HepG2 (cell line): ENCODE measurements at regions of chr4 and their contacts with region 1.

Region 1: GRCh38 chr4:94428884-94429557 is 22.7 kb upstream of the PDLIM5 start:
- DNase-seq: peak; percentile 96
- ATAC-seq: peak; percentile 98
- H3K4me3 ChIP-seq: no peak overlapping the region
- H3K27ac ChIP-seq: peak overlapping the region; percentile 68
- H3K4me1 ChIP-seq: peaks cover 48% of the 10 kb centered on the region
- H3K27me3 ChIP-seq: no peaks in the 10 kb centered on the region
- CTCF ChIP-seq: no peak
- EP300 ChIP-seq: peak in 1 of 2 experiments; percentile 86; a peak in 3 of 4 replicates
- POLR2A ChIP-seq: no peak
- RAD21 ChIP-seq: peak; percentile 26; the same call in 1 of the 2 replicates

Region 2: DNA sequence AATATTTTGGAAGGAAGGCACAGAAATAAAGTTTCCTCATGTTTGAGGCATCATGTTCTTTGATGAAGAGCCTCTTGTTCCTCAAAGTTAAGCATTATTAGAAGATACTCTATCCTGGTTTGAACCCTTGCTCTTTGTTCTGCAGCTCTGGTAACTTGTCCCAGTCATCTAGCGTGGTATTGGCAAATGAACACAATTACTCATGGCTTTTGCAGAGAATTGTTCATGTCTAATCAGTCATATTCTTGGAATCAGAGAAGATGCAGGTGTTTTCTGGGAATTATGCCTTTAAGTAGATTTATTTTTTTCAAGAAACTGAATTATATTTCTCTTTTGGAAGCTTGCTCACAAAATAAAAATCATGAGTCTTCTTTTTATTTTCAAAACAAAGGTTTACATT is 33.5 kb before region 1 on chr4:
- CTCF ChIA-PET with region 1: no interaction called
- POLR2A ChIA-PET with region 1: no interaction called
- in situ Hi-C with region 1: no loop called
- intact Hi-C with region 1: no loop called
- DNase-seq: no peak
- ATAC-seq: no peak
- H3K4me3 ChIP-seq: no peak overlapping the region
- H3K27ac ChIP-seq: no peak overlapping the region
- H3K4me1 ChIP-seq: no peaks in the 10 kb centered on the region
- H3K27me3 ChIP-seq: no peaks in the 10 kb centered on the region
- CTCF ChIP-seq: no peak
- EP300 ChIP-seq: no peak
- POLR2A ChIP-seq: no peak
- RAD21 ChIP-seq: no peak

Region 3: DNA sequence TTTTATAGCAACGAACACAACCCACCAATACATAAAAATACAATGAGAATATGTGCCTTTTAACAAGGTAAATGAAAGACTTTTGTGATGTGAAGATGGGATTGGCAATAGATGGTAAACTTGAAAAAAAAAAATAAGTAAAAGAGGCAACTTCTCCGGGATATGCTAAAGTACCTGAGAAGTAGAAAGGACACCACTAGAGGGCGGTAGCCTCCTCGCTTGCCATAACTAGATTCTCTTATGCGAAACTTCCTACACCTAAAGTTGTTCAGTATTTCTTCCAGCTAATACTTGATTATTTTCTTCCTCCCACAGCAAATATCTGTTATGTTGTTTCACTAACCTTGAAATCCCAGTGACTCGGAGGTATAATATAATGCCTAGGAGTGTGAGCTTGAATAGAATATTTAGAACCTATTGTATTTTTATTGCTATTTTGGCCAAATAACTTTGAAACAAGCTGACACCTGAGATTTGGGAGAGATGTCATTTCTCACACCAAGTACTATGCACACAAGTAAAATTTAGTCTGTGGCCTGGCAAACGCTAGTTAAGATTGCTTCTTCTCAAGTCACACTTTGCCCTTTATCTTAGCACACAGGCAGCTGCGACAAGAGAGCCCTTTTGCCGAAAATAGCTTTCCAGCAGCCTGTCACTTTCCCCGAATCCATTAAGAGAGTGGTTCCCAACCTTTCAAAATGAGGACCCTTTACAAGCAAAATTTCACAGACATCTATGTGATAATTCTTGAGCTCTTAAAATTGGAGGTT is 22.2 kb before region 1 on chr4:
- CTCF ChIA-PET with region 1: no interaction called
- POLR2A ChIA-PET with region 1: interaction called, 13 read pairs
- in situ Hi-C with region 1: no loop called
- intact Hi-C with region 1: no loop called
- DNase-seq: peak; percentile 73
- ATAC-seq: peak; percentile 68
- H3K4me3 ChIP-seq: no peak overlapping the region
- H3K27ac ChIP-seq: no peak overlapping the region
- H3K4me1 ChIP-seq: peaks cover 30% of the 10 kb centered on the region
- H3K27me3 ChIP-seq: no peaks in the 10 kb centered on the region
- CTCF ChIP-seq: peak; percentile 83
- EP300 ChIP-seq: no peak
- POLR2A ChIP-seq: no peak
- RAD21 ChIP-seq: peak; percentile 75